Right ventricle myocardium superior (tissue), 1 donor: ENCODE measurements at regions of chr3 and their contacts with region 1.

Region 1: GRCh38 chr3:186540221-186540834 is 3.9 kb downstream of the CRYGS start:
- DNase-seq: peak; percentile 47
- ATAC-seq: peak; percentile 91

Region 2: DNA sequence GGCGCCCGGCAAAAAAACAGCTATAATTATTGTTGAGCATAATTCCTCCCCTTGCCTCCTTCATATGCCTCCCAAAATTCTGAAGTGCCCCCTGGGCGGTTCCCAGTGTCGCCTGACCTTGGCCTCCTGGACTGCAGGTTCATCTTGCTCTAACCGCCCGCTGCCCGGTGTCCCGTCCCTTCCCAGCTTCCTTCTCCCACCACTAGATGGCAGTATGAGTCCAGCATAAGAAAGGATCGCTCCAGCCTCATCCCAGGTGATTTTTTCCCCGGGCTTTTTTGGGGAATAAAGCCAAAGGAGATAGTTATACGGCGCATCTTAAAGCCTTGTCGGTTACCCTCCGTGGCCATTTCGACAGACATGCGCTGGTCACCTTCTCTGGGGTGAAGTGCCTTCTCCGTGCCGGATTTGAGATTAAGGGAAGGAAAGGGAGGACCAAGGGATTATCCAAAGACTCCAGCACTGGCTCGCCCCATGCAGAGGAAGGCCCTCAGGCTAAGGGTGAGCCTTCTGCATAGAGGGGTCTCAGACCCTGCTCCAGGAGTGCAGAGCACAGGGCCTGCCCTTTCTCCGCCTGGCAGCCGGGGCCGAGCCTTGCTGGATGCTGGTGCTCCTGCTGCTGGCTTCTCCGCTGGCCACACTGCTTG is 556.7 kb before region 1 on chr3:
- intact Hi-C with region 1: loop called (anchors 5 kb)
- DNase-seq: peak; percentile 68
- ATAC-seq: peak; percentile 97

Region 3: GRCh38 chr3:186259612-186260383 is 280.5 kb before region 1 on chr3:
- intact Hi-C with region 1: loop called (anchors 2 kb)
- DNase-seq: peak; percentile 75
- ATAC-seq: peak; percentile 97

Region 4: DNA sequence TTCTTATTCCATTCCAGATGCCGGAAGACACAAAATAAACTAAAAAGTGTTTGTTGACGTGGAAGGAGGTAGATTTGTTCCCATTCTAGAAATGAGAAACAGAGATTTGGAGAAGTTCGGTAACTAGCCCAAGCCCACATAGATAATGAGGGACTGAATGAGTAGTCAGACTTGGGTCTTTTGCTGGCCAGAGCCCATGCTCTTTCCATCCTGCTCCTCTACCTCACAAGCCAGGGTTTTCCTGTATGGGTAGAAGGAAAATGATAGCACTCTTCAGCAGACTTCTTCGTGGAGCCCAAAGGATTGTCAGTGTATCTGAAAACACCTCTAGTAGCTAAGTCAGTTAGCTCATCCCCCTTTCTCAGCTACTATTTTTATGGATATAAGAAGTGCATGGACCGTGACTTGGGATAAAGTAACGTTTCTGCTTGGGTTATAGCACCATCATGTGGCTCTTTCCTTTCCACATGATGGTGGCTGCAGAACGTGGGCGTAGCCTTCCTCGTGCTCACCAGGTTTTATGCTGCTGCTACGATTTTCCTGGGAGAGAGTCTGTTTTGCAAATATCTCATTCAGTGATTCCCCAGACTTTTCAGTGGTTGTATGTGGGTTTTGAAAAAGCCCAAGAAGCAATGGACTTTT is 262.9 kb before region 1 on chr3:
- intact Hi-C with region 1: no loop called
- DNase-seq: no peak
- ATAC-seq: no peak

Region 5: DNA sequence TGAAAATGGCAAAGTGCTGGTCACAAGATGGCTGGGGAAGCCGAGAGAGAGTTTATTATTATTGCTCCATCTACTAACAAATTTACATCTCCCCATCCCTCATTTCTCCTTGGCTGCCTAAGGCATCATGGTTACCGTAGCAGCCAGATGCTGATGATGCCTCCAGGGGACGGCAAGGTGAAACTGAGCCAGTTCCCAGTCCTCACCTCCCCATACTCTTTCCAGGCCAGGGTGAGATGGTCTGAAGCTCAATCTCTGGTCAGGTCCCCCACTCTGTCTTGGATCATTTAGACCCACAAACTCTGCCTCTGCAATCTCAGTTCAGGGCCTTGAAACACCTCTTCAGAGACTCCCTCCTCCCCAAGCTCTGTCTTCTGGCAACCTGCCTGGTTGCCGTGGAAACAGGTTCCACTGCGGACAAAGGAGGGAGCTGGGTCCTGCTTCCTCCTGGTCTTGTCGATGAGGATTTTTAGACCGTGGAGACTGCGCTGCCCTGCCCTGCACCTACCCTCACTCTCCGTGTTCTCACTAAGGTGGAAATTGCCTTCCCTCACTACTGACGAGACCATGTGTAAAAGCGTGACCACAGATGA is 656.8 kb after region 1 on chr3 and contains the start of gene RTP1:
- intact Hi-C with region 1: no loop called
- DNase-seq: no peak
- ATAC-seq: no peak
- total RNA-seq, gene RTP1: not detected